ENCODE measurements at regions of chr1 and their contacts with region 1.

Region 1: DNA sequence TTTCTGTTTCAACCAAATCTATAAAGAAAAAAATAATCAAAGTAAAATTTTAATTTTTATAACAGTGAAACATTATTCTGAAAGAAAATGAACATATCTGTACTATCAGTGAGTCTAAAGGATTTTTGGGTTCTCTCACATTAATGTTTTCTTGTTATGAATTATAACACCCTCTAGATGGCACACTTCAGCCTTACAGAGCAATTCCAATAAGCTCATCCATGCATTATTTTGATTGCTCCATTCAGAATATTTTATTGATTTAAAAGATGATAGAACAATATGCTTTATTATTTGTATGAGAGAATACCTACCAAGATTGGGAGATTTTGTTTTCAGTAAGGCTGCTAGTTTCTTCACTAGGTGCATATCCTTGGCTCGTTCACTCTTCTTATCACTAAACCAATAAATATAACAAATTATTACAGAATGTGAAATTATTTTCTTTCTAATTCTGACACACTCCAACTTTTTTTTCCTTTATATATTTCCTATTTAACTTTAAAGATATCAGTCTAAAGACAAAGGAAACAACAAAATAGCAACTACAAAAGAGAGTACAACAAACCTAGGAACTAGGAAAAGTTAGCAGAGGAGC is 82.4 kb downstream of the RAB3GAP2 start:
- DNase-seq: no peak
- H3K4me3 ChIP-seq: no peak overlapping the region
- H3K27ac ChIP-seq: no peak overlapping the region
- H3K27me3 ChIP-seq: no peaks in the 10 kb centered on the region
- CTCF ChIP-seq: peak; percentile 54

Region 2: DNA sequence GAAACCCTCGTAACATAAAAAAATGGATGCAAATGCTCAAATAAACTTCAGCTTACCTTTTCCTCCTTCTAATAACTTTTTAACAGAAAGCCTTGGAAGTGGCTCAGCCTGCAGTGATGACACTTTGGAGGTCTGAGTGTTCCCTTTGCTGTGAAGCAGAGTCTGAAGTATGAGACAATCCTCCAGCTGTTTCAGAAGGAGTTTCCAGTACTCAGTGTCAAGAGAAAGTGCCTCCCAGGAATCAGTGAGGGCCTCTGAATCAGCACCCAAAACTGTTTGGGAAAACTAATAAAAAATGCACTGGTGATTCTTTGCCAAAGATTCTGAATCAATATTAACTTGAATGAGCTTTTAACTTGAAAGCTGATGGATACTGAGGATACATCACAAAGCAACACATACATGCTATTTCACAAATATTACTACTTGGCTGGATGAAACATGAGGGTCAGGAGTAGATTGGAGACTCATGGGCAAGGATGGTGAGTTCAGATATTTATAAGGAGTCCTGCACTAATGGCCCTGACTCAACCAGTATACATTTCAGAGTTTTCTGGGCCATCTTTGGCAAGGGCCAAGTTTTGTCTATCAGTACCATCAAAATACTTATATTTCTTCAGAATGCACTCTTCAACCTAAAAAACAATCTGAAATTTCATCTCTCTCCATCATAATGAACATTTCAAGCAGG is 18.9 kb before region 1 on chr1:
- CTCF ChIA-PET with region 1: interaction called, 10 read pairs
- POLR2A ChIA-PET with region 1: no interaction called
- DNase-seq: no peak
- H3K4me3 ChIP-seq: no peak overlapping the region
- H3K27ac ChIP-seq: no peak overlapping the region
- H3K27me3 ChIP-seq: no peaks in the 10 kb centered on the region
- CTCF ChIP-seq: no peak